MCF 10A (cell line): ENCODE measurements at regions of chr2 and their contacts with region 1.

Region 1: GRCh38 chr2:120620025-120620793 is 115.5 kb upstream of the GLI2 start:
- DNase-seq: peak; percentile 68
- H3K4me3 Mint-ChIP-seq: no peak overlapping the region
- H3K27ac Mint-ChIP-seq: peak overlapping the region; percentile 93
- H3K4me1 Mint-ChIP-seq: peaks cover 22% of the 10 kb centered on the region
- H3K27me3 Mint-ChIP-seq: no peaks in the 10 kb centered on the region
- CTCF ChIP-seq: no peak

Region 2: GRCh38 chr2:119491808-119492533 is 1128.2 kb before region 1 on chr2:
- CTCF ChIA-PET with region 1: no interaction called
- POLR2A ChIA-PET with region 1: no interaction called
- intact Hi-C with region 1: no loop called
- DNase-seq: peak; percentile 81
- H3K4me3 Mint-ChIP-seq: no peak overlapping the region
- H3K27ac Mint-ChIP-seq: peak overlapping the region; percentile 77
- H3K4me1 Mint-ChIP-seq: peaks cover 36% of the 10 kb centered on the region
- H3K27me3 Mint-ChIP-seq: peaks cover 2% of the 10 kb centered on the region
- CTCF ChIP-seq: no peak

Region 3: DNA sequence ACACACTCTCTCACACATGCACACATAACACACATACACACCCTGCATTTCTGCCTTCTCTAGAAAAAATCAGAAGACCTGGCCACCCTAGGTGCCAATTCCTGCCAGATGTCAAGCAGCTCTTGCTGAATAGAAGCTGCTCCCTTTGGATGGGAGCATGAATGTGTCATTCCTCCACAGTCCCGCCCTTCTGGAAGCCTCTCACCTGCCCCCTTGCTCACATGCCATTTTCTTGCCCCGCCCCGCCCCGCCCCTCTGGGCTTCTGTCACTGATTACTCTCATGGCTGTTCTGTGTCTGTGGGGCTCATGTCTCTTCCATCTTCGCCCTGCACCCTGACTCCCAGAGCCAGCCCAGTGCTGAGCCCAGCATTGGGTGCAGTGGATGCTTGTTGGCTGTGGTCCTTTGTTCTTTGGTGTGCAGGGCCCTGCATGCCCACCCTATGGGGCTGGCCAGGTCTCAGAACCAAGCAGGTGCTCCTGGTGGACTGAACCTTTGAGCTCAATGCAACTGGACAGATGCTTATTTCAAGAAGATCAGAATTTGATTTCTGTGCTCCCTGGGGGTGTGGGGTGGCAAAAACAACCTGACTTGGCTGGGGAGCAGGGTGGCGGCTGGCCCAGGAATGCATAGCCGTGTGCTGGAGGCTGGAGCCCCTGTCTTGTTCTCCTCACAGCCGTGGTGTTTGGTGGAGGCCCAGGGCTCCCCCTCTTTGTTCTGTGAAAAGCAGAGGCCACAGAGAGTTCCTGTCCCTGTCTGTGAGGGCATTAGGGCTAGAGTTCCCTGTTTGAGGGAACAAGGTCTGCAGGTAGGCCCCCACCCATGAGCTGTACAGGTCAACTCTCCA is 25.1 kb before region 1 on chr2:
- CTCF ChIA-PET with region 1: no interaction called
- POLR2A ChIA-PET with region 1: interaction called, 11 read pairs
- intact Hi-C with region 1: no loop called
- DNase-seq: peak; percentile 77
- H3K4me3 Mint-ChIP-seq: no peak overlapping the region
- H3K27ac Mint-ChIP-seq: no peak overlapping the region
- H3K4me1 Mint-ChIP-seq: peaks cover 20% of the 10 kb centered on the region
- H3K27me3 Mint-ChIP-seq: no peaks in the 10 kb centered on the region
- CTCF ChIP-seq: no peak

Region 4: GRCh38 chr2:120605231-120605935 is 14.8 kb before region 1 on chr2:
- CTCF ChIA-PET with region 1: interaction called, 3 read pairs
- POLR2A ChIA-PET with region 1: interaction called, 20 read pairs
- intact Hi-C with region 1: no loop called
- DNase-seq: no peak
- H3K4me3 Mint-ChIP-seq: no peak overlapping the region
- H3K27ac Mint-ChIP-seq: no peak overlapping the region
- H3K4me1 Mint-ChIP-seq: peaks cover 19% of the 10 kb centered on the region
- H3K27me3 Mint-ChIP-seq: no peaks in the 10 kb centered on the region
- CTCF ChIP-seq: no peak